Activated T-helper 1 cell treated with anti-CD3 and anti-CD28 coated beads, Interleukin-12 subunit alpha, Interleukin-12 subunit beta, Interleukin-2, Interleukin-4 antibody, amounts not matched to agents 30 ng/mL and 10 ng/mL and 1 ng/mL, durations not matched to agents 14 hours and 24 hours and 36 hours (primary cell): ENCODE measurements at regions of chr11 and their contacts with region 1.

Region 1: DNA sequence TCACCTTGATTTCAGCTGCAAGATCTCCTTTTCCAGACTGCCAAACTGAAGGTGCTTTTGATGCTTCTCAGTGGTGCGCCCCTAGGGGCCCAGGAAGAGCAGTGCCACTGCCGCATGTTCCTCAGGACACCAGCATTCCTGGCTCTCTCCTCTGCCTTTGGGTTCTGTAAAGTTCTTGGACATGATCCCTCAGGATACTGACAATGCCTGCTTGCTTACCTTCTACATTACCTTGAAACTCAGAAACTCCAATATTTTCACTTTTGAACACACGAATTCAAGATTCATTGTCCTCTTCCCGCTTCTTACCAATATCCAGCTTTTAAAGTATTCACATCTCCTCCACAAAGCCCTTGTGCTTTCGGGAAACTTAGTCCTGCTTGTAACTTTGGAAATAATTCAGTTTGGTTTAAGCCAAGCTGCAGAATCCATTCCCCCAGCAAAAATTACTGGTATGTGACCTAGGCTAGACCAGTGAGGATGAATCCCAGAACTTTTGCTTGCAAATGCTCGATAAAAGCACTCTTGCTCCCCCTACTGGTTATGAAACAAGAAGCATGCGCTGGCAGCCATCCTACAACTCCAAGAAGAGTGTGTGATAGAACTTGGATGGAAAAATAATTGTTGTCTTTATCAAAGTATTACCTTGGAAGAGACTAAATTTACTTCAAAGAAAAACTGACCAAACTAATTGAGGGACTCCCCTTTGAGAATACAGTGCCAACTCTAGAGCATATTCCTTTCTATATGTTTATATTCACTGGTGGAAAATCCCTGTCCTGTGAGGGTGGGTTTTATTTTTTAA is 16.5 kb upstream of the OR5B21 start:
- DNase-seq: no peak
- H3K4me3 Mint-ChIP-seq: peak overlapping the region; percentile 74
- H3K27ac Mint-ChIP-seq: peak overlapping the region; percentile 77
- H3K4me1 Mint-ChIP-seq: peaks cover 36% of the 10 kb centered on the region
- H3K27me3 Mint-ChIP-seq: no peaks in the 10 kb centered on the region

Region 2: DNA sequence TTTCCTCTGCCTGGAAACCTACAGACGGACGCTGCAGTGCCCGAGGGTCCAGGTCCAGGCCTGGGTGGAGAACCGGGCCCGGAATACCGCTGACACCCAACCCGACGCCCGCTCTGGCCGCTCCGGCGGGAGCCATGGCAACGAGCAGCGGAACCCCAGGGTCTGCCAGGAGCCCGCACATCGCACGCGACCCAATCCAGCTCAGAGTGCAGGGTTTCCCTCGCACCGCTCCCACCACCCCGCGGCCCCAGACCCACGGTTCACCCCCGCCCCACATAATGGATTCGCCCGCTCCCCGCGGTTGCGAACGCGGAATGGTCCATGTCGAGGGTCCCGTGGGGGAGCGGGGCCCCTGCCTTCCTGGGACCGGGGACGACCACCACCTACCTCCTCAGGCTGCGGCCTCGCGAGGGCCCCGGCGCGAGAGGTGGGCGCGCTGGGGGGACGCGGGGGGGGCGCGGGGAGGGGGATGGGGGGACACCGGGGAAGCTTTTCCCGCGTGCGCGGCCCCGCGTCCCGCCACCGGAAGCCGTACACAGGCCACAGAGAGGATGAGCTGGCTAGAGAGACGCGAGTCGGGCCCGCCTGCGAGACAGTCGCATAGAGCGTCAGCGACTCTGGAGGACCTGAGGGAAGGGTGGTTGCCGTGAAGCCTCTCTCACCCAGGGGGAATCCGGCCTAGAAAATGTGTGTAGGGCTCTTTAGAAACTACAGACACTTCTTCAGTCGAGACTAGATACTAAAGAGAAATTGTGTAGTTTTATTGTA is 1188.9 kb before region 1 on chr11 and contains the start of gene SSRP1:
- intact Hi-C with region 1: loop called (anchors 1 kb)
- DNase-seq: peak; percentile 81
- H3K4me3 Mint-ChIP-seq: peak within 1 kb of the TSS; percentile 92
- H3K27ac Mint-ChIP-seq: peak within 1 kb of the TSS; percentile 99
- H3K4me1 Mint-ChIP-seq: peaks cover 39% of the 10 kb centered on the region
- H3K27me3 Mint-ChIP-seq: peaks cover 1% of the 10 kb centered on the region
- total RNA-seq, gene SSRP1: 235 and 239 TPM in 2 replicates

Region 3: GRCh38 chr11:57644748-57645688 is 879.4 kb before region 1 on chr11:
- intact Hi-C with region 1: loop called (anchors 5 kb)
- DNase-seq: peak; percentile 77
- H3K4me3 Mint-ChIP-seq: no peak overlapping the region
- H3K27ac Mint-ChIP-seq: no peak overlapping the region
- H3K4me1 Mint-ChIP-seq: peaks cover 48% of the 10 kb centered on the region
- H3K27me3 Mint-ChIP-seq: peaks cover 39% of the 10 kb centered on the region

Region 4: GRCh38 chr11:57815476-57815875 is 709.0 kb before region 1 on chr11:
- intact Hi-C with region 1: loop called (anchors 2 kb)
- DNase-seq: no peak
- H3K4me3 Mint-ChIP-seq: no peak overlapping the region
- H3K27ac Mint-ChIP-seq: peak overlapping the region; percentile 19
- H3K4me1 Mint-ChIP-seq: peaks cover 21% of the 10 kb centered on the region
- H3K27me3 Mint-ChIP-seq: peaks cover 4% of the 10 kb centered on the region

Region 5: GRCh38 chr11:58391879-58392278 is 132.6 kb before region 1 on chr11:
- intact Hi-C with region 1: loop called (anchors 1 kb)
- DNase-seq: no peak
- H3K4me3 Mint-ChIP-seq: no peak overlapping the region
- H3K27ac Mint-ChIP-seq: peak overlapping the region; percentile 9
- H3K4me1 Mint-ChIP-seq: no peaks in the 10 kb centered on the region
- H3K27me3 Mint-ChIP-seq: no peaks in the 10 kb centered on the region

Region 6: DNA sequence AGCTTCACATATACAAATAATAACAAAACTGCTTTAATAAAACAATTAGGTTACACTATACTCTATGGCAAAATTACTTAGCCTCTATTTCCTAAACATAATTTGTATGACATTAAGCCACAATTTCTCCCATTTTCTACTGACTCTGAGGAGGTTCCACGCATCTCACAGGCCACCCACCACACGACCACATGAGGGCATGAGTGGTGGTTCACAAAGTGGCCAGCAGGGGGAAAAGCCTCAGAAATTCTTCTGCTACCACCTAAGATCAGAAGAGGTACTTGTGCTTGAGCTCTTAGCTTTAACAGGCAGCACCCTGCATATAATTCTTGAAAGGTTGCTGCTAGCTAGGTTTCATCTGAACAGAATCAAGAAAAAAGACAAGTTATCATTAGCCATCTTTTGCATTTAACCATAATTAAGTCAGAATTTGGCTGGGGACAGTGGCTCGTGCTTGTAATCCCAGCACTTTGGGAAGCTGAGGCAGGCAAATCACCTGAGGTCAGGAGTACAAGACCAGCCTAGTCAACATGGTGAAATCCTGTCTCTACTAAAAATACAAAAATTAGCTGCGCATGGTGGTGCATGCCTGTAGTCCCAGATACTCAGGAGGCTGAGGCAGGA is 43.6 kb after region 1 on chr11:
- intact Hi-C with region 1: loop called (anchors 1 kb)
- DNase-seq: peak; percentile 53
- H3K4me3 Mint-ChIP-seq: peak overlapping the region; percentile 34
- H3K27ac Mint-ChIP-seq: peak overlapping the region; percentile 28
- H3K4me1 Mint-ChIP-seq: peaks cover 56% of the 10 kb centered on the region
- H3K27me3 Mint-ChIP-seq: no peaks in the 10 kb centered on the region

Region 7: DNA sequence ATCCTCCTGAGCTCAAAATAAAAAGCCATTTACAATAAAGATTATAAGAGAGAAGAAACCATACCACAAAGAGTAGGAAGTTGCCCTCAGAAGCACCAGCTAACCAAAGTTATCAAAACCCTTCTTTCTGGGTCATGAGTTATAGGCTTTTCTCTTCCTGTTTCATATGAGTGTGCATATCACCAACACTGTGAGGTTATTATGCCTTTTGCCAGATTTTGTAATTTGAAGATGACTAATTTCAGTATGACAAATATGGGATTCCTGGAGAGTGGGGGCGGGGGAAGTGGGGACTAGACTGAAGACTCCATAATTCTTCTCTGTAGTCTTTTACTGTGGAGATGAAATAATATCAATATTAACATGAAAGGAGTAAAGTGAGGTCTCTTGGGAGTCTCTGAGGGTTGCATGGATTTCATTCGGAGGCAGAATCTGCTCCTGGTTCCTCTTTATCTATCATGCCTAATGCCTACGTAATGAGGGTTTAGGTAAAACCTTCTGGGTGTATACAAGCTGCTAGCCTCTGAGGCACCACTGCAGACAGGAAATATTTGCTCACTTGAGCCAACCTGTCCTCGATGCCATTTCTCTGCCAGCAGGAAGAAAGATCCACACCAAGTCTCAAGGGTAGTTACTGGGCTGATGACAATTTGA is 49.1 kb after region 1 on chr11:
- intact Hi-C with region 1: loop called (anchors 1 kb)
- DNase-seq: no peak
- H3K4me3 Mint-ChIP-seq: peak overlapping the region; percentile 90
- H3K27ac Mint-ChIP-seq: peak overlapping the region; percentile 100
- H3K4me1 Mint-ChIP-seq: peaks cover 68% of the 10 kb centered on the region
- H3K27me3 Mint-ChIP-seq: no peaks in the 10 kb centered on the region